ENCODE measurements at regions of chr15 and their contacts with region 1.

Region 1: GRCh38 chr15:93942269-93942694 is 289.1 kb upstream of the MCTP2 start:
- DNase-seq: no peak
- H3K4me3 Mint-ChIP-seq: no peak overlapping the region
- H3K27ac Mint-ChIP-seq: no peak overlapping the region
- H3K4me1 Mint-ChIP-seq: no peaks in the 10 kb centered on the region
- H3K27me3 Mint-ChIP-seq: peaks cover 3% of the 10 kb centered on the region

Region 2: GRCh38 chr15:93703092-93703739 is 239.1 kb before region 1 on chr15:
- CTCF ChIA-PET with region 1: no interaction called
- POLR2A ChIA-PET with region 1: no interaction called
- DNase-seq: no peak
- H3K4me3 Mint-ChIP-seq: no peak overlapping the region
- H3K27ac Mint-ChIP-seq: no peak overlapping the region
- H3K4me1 Mint-ChIP-seq: no peaks in the 10 kb centered on the region
- H3K27me3 Mint-ChIP-seq: no peaks in the 10 kb centered on the region

Region 3: DNA sequence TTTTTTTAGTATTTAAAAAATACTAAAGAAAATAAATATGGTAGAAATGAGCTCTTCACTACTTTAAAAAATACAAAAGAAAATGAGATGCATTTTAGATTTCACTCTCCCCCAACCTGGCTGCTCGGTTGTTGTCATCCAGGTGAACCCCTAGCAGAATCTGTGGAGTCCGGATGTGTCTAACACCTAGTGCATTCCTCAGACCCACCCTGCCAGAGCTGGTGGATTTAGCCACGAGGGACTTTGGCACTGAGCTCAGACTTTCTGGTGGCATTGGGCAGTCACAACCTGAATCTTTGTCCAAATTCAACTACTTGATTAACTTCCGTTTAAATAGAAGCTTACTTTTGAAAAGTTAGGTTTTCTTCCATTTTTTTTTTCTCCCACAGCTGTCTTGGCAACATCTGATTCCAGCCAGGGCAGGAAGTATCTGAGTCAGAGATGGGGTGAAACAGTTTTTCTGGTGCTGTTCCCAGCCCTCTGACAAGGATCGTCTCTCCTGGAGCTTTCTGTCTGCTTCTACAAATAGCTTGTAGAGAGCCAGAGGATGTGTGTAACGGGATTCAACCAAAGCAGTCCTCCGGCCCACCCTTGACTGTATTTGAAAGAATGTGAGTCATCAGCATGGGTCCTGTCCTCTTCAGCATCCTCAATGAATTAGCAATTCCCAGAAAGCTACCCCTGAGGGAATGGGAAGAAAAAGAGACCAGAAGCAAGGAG is 12.7 kb before region 1 on chr15:
- CTCF ChIA-PET with region 1: interaction called, 11 read pairs
- POLR2A ChIA-PET with region 1: no interaction called
- DNase-seq: no peak
- H3K4me3 Mint-ChIP-seq: no peak overlapping the region
- H3K27ac Mint-ChIP-seq: no peak overlapping the region
- H3K4me1 Mint-ChIP-seq: peaks cover 13% of the 10 kb centered on the region
- H3K27me3 Mint-ChIP-seq: peaks cover 14% of the 10 kb centered on the region

Region 4: GRCh38 chr15:94029495-94029894 is 87.2 kb after region 1 on chr15:
- CTCF ChIA-PET with region 1: no interaction called
- POLR2A ChIA-PET with region 1: no interaction called
- DNase-seq: no peak
- H3K4me3 Mint-ChIP-seq: no peak overlapping the region
- H3K27ac Mint-ChIP-seq: no peak overlapping the region
- H3K4me1 Mint-ChIP-seq: no peaks in the 10 kb centered on the region
- H3K27me3 Mint-ChIP-seq: peaks cover 2% of the 10 kb centered on the region